CD8-positive, alpha-beta T cell (primary cell): ENCODE measurements at regions of chr4 and their contacts with region 1.

Region 1: GRCh38 chr4:87390891-87391575 is at the start of gene HSD17B11:
- DNase-seq: peak; percentile 65 to 93 (median 84)
- ATAC-seq: peak; percentile 98
- H3K4me3 ChIP-seq: peak within 1 kb of the TSS; percentile 52 to 83
- H3K4me3 Mint-ChIP-seq: peak within 1 kb of the TSS; percentile 98
- H3K27ac ChIP-seq: peak within 1 kb of the TSS; percentile 57 to 84
- H3K27ac Mint-ChIP-seq: peak within 1 kb of the TSS; percentile 91
- H3K4me1 ChIP-seq: peaks cover 29% of the 10 kb centered on the region
- H3K4me1 Mint-ChIP-seq: peaks cover 55% of the 10 kb centered on the region
- H3K27me3 ChIP-seq: no peaks in the 10 kb centered on the region
- H3K27me3 Mint-ChIP-seq: no peaks in the 10 kb centered on the region
- CTCF ChIP-seq: no peak
- total RNA-seq, gene HSD17B11: 38.8 to 42.4 TPM

Region 2: GRCh38 chr4:86934771-86935565 is 456.1 kb before region 1 on chr4 and contains the start of gene AFF1:
- CTCF ChIA-PET with region 1: no interaction called
- POLR2A ChIA-PET with region 1: no interaction called
- intact Hi-C with region 1: loop called (anchors 10 kb)
- DNase-seq: peak; percentile 74 to 97 (median 85)
- ATAC-seq: peak; percentile 71
- H3K4me3 ChIP-seq: peak within 1 kb of the TSS; percentile 76 to 87
- H3K4me3 Mint-ChIP-seq: peak within 1 kb of the TSS; percentile 88
- H3K27ac ChIP-seq: peak within 1 kb of the TSS; percentile 81 to 85
- H3K27ac Mint-ChIP-seq: peak within 1 kb of the TSS; percentile 95
- H3K4me1 ChIP-seq: peaks cover 42% of the 10 kb centered on the region
- H3K4me1 Mint-ChIP-seq: peaks cover 50% of the 10 kb centered on the region
- H3K27me3 ChIP-seq: no peaks in the 10 kb centered on the region
- H3K27me3 Mint-ChIP-seq: no peaks in the 10 kb centered on the region
- CTCF ChIP-seq: peak; percentile 44
- total RNA-seq, gene AFF1: 32.3 to 33.8 TPM

Region 3: GRCh38 chr4:87235020-87235671 is 155.9 kb before region 1 on chr4:
- CTCF ChIA-PET with region 1: no interaction called
- POLR2A ChIA-PET with region 1: no interaction called
- intact Hi-C with region 1: loop called in 1 of 2 experiments (anchors 10 kb)
- DNase-seq: peak in 1 of 9 experiments; percentile 5
- ATAC-seq: no peak
- H3K4me3 ChIP-seq: peak overlapping the region; percentile 52 to 61
- H3K4me3 Mint-ChIP-seq: peak overlapping the region; percentile 79
- H3K27ac ChIP-seq: no peak overlapping the region
- H3K27ac Mint-ChIP-seq: no peak overlapping the region
- H3K4me1 ChIP-seq: peaks cover 4% of the 10 kb centered on the region
- H3K4me1 Mint-ChIP-seq: peaks cover 2% of the 10 kb centered on the region
- H3K27me3 ChIP-seq: no peaks in the 10 kb centered on the region
- H3K27me3 Mint-ChIP-seq: no peaks in the 10 kb centered on the region
- CTCF ChIP-seq: no peak

Region 4: DNA sequence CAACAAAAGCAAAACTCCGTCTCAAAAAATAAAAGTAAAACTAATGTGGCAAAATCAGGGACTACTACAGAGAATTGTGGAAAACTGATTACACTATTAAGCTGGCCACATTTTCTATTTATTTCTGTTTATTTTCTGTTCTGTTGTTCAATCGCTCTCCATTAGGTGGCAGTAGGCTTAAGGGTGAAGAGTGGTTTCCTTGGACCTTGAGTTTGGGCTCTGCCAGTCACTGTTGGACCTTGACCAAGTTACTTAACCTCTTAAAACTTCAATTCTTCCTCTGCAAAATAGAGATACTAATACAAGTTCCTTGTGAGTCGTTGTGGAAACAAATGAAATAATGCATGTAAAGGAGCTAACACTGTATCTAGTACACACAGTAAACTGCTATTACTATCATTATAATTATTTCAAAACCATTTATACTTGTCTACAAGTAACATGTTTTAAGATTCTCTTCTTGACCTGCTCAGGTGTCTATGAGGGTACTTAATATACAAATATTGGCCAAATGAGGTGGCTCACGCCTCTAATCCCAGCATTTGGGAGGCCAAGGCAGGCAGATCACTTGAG is 15.2 kb before region 1 on chr4:
- CTCF ChIA-PET with region 1: interaction called, 19 read pairs
- POLR2A ChIA-PET with region 1: interaction called, 3 read pairs
- intact Hi-C with region 1: loop called in 1 of 2 experiments (anchors 2 kb)
- DNase-seq: peak in 2 of 9 experiments; percentile 51 to 66
- ATAC-seq: peak; percentile 63
- H3K4me3 ChIP-seq: no peak overlapping the region
- H3K4me3 Mint-ChIP-seq: no peak overlapping the region
- H3K27ac ChIP-seq: no peak overlapping the region
- H3K27ac Mint-ChIP-seq: no peak overlapping the region
- H3K4me1 ChIP-seq: no peaks in the 10 kb centered on the region
- H3K4me1 Mint-ChIP-seq: peaks cover 5% of the 10 kb centered on the region
- H3K27me3 ChIP-seq: no peaks in the 10 kb centered on the region
- H3K27me3 Mint-ChIP-seq: no peaks in the 10 kb centered on the region
- CTCF ChIP-seq: peak; percentile 76

Region 5: GRCh38 chr4:87406462-87406861 is 15.4 kb after region 1 on chr4:
- CTCF ChIA-PET with region 1: interaction called, 4 read pairs
- POLR2A ChIA-PET with region 1: interaction called, 10 read pairs
- intact Hi-C with region 1: loop called in 1 of 2 experiments (anchors 2 kb)
- DNase-seq: peak in 2 of 9 experiments; percentile 9 to 42
- ATAC-seq: peak; percentile 57
- H3K4me3 ChIP-seq: no peak overlapping the region
- H3K4me3 Mint-ChIP-seq: peak overlapping the region; percentile 69
- H3K27ac ChIP-seq: peak overlapping the region in 1 of 2 experiments; percentile 23
- H3K27ac Mint-ChIP-seq: peak overlapping the region; percentile 86
- H3K4me1 ChIP-seq: peaks cover 11% of the 10 kb centered on the region
- H3K4me1 Mint-ChIP-seq: peaks cover 22% of the 10 kb centered on the region
- H3K27me3 ChIP-seq: no peaks in the 10 kb centered on the region
- H3K27me3 Mint-ChIP-seq: peaks cover 23% of the 10 kb centered on the region
- CTCF ChIP-seq: no peak

Region 6: DNA sequence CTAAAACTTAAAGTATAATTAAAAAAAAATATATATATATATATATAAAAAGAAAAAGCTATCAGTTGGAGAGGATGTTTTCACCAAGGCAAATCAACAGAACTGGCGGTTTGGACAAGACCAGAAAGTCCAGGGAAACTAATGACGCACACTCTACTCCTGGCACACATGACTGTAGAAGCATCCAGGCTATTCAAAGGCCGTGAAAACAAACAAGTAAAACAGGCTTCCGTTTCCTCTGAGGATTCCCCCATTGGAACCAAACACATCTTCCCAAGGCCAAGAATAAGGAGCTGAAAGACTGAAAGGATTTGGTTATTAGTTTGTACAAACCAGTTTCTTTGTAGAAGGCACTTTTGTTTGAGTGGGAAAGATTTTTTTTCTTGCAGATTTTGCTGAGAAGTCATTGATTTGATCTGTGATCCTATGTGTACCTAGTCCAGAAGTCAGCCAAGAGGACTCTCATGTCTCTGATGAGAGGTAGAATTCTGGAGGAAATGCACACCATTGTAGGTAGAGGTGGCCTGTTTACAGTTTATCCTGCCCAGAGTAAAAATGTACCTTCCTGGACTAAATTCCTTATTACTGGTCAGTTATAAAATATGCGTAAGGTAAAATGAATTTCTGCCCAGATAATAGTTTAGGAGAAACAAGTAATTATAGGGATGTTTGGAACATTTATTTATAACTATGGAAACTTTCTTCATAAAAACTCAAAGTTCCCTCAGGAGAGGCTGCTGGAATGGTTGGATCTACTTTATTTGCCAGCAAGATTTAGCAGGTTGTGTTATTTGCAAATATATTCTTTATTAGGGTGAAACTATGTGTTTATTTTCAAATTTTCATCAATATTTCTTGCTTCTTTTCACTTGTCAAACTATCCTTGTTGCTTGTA is 325.6 kb after region 1 on chr4:
- CTCF ChIA-PET with region 1: no interaction called
- POLR2A ChIA-PET with region 1: no interaction called
- intact Hi-C with region 1: no loop called
- DNase-seq: no peak
- ATAC-seq: no peak
- H3K4me3 ChIP-seq: no peak overlapping the region
- H3K4me3 Mint-ChIP-seq: no peak overlapping the region
- H3K27ac ChIP-seq: no peak overlapping the region
- H3K27ac Mint-ChIP-seq: no peak overlapping the region
- H3K4me1 ChIP-seq: no peaks in the 10 kb centered on the region
- H3K4me1 Mint-ChIP-seq: no peaks in the 10 kb centered on the region
- H3K27me3 ChIP-seq: no peaks in the 10 kb centered on the region
- H3K27me3 Mint-ChIP-seq: no peaks in the 10 kb centered on the region
- CTCF ChIP-seq: no peak